ENCODE measurements at regions of chr17 and their contacts with region 1.

Region 1: DNA sequence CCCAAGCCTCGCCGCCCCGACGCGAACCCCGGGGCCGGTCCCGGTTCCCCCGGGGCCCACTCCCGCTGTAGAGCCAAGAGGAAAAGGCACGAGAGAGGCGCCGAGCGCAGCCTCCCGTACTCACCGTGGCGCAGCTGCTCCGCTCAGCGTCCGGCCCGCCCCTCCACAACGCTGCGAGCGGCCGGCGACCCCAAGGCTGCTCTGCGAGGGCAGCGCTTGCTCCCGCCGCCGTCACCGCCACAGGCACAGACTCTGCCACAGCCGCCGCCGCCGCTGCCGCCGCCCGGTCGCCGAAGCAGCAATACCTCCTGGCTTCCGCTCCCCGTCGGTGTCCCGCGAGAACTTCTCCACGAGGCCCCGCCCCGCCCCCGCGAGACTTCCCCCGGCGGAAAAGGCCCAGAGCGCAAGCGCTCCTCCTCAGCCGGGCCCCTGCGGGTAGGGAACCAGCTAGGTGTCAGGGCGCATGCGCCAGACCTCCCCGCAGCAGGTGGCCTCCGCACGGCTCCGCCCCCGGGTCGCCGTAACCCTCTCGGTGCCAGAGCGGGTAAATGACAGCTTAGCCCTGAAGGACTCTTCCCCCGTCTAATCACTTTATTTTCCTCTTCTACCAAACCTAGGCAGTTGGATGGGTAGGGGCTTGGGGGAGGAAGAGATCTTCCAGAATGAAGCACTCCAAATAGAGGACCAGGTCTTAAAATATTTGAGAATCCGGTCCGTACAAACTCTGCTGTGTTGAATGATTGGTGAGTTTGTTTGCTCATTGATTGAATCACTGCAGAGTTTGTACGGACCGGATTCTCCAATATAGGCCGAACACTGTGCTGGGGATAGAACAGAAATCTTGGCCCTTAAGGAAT is at the start of gene GRB2:
- DNase-seq: peak; percentile 96
- ATAC-seq: peak; percentile 84
- H3K4me3 ChIP-seq: peak within 1 kb of the TSS; percentile 73 to 99 (median 96)
- H3K27ac ChIP-seq: peak within 1 kb of the TSS; percentile 87
- H3K4me1 ChIP-seq: peaks cover 57% of the 10 kb centered on the region
- H3K27me3 ChIP-seq: no peaks in the 10 kb centered on the region; a peak in 1 of 5 replicates
- CTCF ChIP-seq: peak; percentile 22; the same call in 1 of the 2 replicates
- EP300 ChIP-seq: 0 out of 4 replicates have a peak, but pooled peaks of 1 of the 2 experiments have one; percentile 2
- POLR2A ChIP-seq: peak; percentile 71 to 94
- RAD21 ChIP-seq: peak; percentile 44; the same call in 1 of the 2 replicates
- total RNA-seq, gene GRB2: 92.3 and 95.7 TPM in 2 replicates

Region 2: DNA sequence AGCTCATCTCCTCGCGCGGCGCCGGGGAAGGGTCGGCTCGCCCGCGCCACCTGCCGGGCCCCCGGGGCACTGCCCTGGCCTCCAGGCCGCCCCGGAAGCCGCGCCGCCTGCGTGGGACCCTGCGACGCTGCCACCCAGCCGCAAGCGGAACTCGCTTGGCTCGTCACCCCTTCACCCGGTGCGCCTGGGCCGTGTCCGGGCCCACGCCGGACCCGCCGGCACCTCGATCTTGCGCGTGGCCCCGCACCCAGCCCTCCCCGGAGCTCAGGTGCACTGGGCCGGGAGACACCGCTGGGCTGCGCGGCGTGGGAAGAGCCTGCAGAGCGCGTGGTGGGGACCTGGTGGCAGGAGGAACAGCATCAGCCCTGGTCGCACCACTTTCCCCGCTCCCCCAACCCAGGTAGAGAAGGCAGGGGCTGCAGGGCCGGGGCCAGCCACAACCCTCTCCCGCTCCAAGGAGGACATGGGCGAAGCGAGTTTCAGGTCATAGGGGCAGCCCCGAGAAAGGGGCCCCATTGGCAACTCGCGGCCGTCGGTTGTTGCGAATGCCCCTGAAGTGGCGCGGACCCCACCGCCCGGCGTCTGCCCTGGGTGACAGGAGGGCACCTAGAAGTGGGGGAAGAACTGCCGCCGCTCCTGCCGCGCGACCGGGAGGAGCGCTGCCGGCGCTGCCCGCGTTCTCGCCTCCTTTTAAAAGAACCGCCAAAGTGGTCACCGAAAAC is 134.2 kb before region 1 on chr17:
- CTCF ChIA-PET with region 1: no interaction called
- POLR2A ChIA-PET with region 1: interaction called, 19 read pairs
- in situ Hi-C with region 1: loop called (anchors 5 kb)
- intact Hi-C with region 1: loop called (anchors 2 kb)
- DNase-seq: peak; percentile 58
- ATAC-seq: peak; percentile 36
- H3K4me3 ChIP-seq: peak overlapping the region; percentile 91 to 98 (median 94)
- H3K27ac ChIP-seq: peak overlapping the region; percentile 77
- H3K4me1 ChIP-seq: peaks cover 43% of the 10 kb centered on the region
- H3K27me3 ChIP-seq: no peaks in the 10 kb centered on the region
- CTCF ChIP-seq: peak; percentile 70
- EP300 ChIP-seq: no peak
- POLR2A ChIP-seq: peak in 1 of 2 experiments; percentile 71; a peak in 2 of 4 replicates
- RAD21 ChIP-seq: peak; percentile 87

Region 3: GRCh38 chr17:75289115-75289831 is 116.3 kb before region 1 on chr17 and contains the start of gene SLC25A19:
- CTCF ChIA-PET with region 1: interaction called, 5 read pairs
- POLR2A ChIA-PET with region 1: interaction called, 17 read pairs
- in situ Hi-C with region 1: no loop called
- intact Hi-C with region 1: loop called (anchors 1 kb)
- DNase-seq: peak; percentile 99
- ATAC-seq: peak; percentile 97
- H3K4me3 ChIP-seq: peak within 1 kb of the TSS; percentile 74 to 94 (median 87)
- H3K27ac ChIP-seq: peak within 1 kb of the TSS; percentile 75
- H3K4me1 ChIP-seq: peaks cover 57% of the 10 kb centered on the region
- H3K27me3 ChIP-seq: no peaks in the 10 kb centered on the region
- CTCF ChIP-seq: peak; percentile 93
- EP300 ChIP-seq: no peak
- POLR2A ChIP-seq: peak; percentile 94 to 99
- RAD21 ChIP-seq: peak; percentile 77
- total RNA-seq, gene SLC25A19: 41.4 and 42.2 TPM in 2 replicates

Region 4: DNA sequence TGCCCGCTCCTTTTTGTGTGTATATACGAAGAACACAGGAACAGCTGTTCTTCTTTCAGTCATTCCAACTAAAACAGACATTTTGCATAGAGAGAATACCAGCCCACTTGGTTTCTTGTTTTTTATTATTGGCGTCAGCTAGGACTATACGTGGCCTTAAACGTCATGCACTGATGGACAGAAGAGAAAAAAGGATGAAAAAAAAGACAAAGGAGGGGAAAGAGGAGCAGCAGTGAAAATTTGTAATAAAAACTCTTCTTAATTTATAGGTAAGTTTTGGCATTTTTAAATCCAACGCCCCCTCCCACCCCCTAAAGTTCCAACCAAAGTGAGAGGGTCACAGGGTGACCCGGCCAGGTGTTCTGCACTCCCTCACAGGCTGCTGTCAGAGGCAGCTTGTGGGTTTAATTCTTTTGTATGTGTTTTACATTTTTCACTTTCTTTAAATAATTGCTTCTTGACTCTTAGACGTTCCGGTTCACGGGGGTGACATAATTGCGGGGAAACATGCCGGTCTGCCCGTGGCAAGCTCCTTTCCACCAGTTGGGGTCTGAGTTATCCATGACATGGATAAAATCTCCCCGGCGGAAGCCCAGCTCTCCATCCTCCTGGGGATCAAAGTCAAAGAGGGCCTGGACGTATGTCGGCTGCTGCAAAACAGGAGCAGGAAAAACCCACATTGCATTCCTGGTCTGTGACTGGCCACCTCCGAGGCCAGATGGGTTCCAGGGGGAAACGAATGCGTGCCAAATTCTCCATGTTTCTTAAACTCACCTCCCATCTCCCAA is 85.5 kb before region 1 on chr17:
- CTCF ChIA-PET with region 1: interaction called, 55 read pairs
- POLR2A ChIA-PET with region 1: interaction called, 14 read pairs
- in situ Hi-C with region 1: loop called (anchors 5 kb)
- intact Hi-C with region 1: loop called (anchors 1 kb)
- DNase-seq: no peak
- ATAC-seq: no peak
- H3K4me3 ChIP-seq: no peak overlapping the region
- H3K27ac ChIP-seq: no peak overlapping the region
- H3K4me1 ChIP-seq: no peaks in the 10 kb centered on the region
- H3K27me3 ChIP-seq: no peaks in the 10 kb centered on the region
- CTCF ChIP-seq: no peak
- EP300 ChIP-seq: no peak
- POLR2A ChIP-seq: no peak
- RAD21 ChIP-seq: no peak

Region 5: GRCh38 chr17:75350706-75351105 is 54.9 kb before region 1 on chr17:
- CTCF ChIA-PET with region 1: no interaction called
- POLR2A ChIA-PET with region 1: interaction called, 3 read pairs
- in situ Hi-C with region 1: no loop called
- intact Hi-C with region 1: loop called (anchors 1 kb)
- DNase-seq: no peak
- ATAC-seq: peak; percentile 41; the same call in 2 of the 3 replicates
- H3K4me3 ChIP-seq: no peak overlapping the region
- H3K27ac ChIP-seq: no peak overlapping the region
- H3K4me1 ChIP-seq: peaks cover 76% of the 10 kb centered on the region
- H3K27me3 ChIP-seq: no peaks in the 10 kb centered on the region
- CTCF ChIP-seq: no peak
- EP300 ChIP-seq: no peak
- POLR2A ChIP-seq: no peak
- RAD21 ChIP-seq: no peak

Region 6: DNA sequence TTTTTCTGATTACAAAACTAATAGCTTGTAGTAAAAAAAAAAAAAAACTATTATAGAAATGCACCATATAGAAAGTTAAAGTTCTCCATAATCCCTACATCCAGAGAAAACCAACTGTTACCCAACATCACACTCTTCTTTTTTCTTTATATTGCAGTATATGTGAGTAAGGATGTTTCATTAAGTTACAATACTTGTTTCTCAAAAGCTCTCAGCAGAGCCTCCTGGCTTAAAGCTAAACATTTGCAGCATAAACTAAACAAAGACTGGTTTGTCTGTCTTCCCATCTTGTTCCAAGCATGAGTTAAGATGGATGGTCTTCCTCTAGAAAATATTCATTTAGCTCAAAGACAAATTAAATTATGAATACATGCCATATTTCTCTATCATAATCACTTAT is 25.3 kb before region 1 on chr17:
- CTCF ChIA-PET with region 1: no interaction called
- POLR2A ChIA-PET with region 1: interaction called, 8 read pairs
- in situ Hi-C with region 1: no loop called
- intact Hi-C with region 1: loop called (anchors 1 kb)
- DNase-seq: no peak
- ATAC-seq: no peak
- H3K4me3 ChIP-seq: no peak overlapping the region
- H3K27ac ChIP-seq: no peak overlapping the region
- H3K4me1 ChIP-seq: peaks cover 58% of the 10 kb centered on the region
- H3K27me3 ChIP-seq: no peaks in the 10 kb centered on the region
- CTCF ChIP-seq: 0 out of 2 replicates have a peak, but pooled peaks have one; percentile 4
- EP300 ChIP-seq: no peak
- POLR2A ChIP-seq: no peak
- RAD21 ChIP-seq: no peak

Region 7: DNA sequence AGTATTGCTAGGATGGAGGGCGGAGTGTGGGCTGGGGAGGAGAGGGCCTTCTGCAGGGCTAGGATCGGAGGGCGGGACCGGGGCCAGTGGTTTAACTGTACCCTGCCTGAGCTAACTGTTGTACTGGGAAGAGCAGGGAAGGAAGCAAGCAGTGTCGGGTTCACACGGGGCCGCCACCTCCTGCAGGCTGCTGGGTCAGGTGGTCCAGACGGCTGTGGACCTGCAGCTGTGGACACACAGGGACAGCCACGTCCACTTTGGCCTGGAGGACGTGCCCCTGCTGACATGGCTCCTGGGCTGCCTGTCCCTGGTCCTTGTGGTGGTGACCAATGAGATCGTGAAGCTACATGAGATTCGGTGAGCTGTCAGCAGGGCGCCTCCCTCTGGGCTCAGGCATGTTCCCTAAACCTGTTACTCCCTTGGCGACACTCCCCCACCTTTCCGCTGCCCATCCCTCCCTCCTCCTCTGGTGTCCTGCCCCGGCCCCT is 93.2 kb after region 1 on chr17:
- CTCF ChIA-PET with region 1: no interaction called
- POLR2A ChIA-PET with region 1: no interaction called
- in situ Hi-C with region 1: no loop called
- intact Hi-C with region 1: no loop called
- DNase-seq: no peak
- ATAC-seq: no peak; the same call in 2 of the 3 replicates
- H3K4me3 ChIP-seq: no peak overlapping the region
- H3K27ac ChIP-seq: no peak overlapping the region
- H3K4me1 ChIP-seq: no peaks in the 10 kb centered on the region
- H3K27me3 ChIP-seq: no peaks in the 10 kb centered on the region
- CTCF ChIP-seq: peak; percentile 41
- EP300 ChIP-seq: no peak
- POLR2A ChIP-seq: no peak; a peak in 1 of 4 replicates
- RAD21 ChIP-seq: no peak